ENCODE measurements at regions of chr6 and their contacts with region 1.

Region 1: GRCh38 chr6:110815217-110816109 is at the start of gene CDK19:
- DNase-seq: peak; percentile 99
- ATAC-seq: peak; percentile 85
- H3K4me3 Mint-ChIP-seq: peak within 1 kb of the TSS; percentile 88
- H3K27ac Mint-ChIP-seq: peak within 1 kb of the TSS; percentile 98
- H3K4me1 Mint-ChIP-seq: peaks cover 32% of the 10 kb centered on the region
- H3K27me3 Mint-ChIP-seq: no peaks in the 10 kb centered on the region
- total RNA-seq, gene CDK19: 14.7 to 15.7 TPM

Region 2: GRCh38 chr6:110179401-110180227 is 635.8 kb before region 1 on chr6 and contains the start of gene WASF1:
- CTCF ChIA-PET with region 1: no interaction called
- POLR2A ChIA-PET with region 1: no interaction called
- intact Hi-C with region 1: loop called in 1 of 2 experiments (anchors 1 kb)
- DNase-seq: peak; percentile 94
- ATAC-seq: peak; percentile 89
- H3K4me3 Mint-ChIP-seq: no peak within 1 kb of the TSS
- H3K27ac Mint-ChIP-seq: peak within 1 kb of the TSS; percentile 7
- H3K4me1 Mint-ChIP-seq: peaks cover 5% of the 10 kb centered on the region
- H3K27me3 Mint-ChIP-seq: peaks cover 10% of the 10 kb centered on the region
- total RNA-seq, gene WASF1: 4.2 to 4.6 TPM

Region 3: GRCh38 chr6:110537208-110538123 is 278.0 kb before region 1 on chr6:
- CTCF ChIA-PET with region 1: no interaction called
- POLR2A ChIA-PET with region 1: no interaction called
- intact Hi-C with region 1: loop called in 1 of 2 experiments (anchors 2 kb)
- DNase-seq: no peak
- ATAC-seq: peak; percentile 95
- H3K4me3 Mint-ChIP-seq: no peak overlapping the region
- H3K27ac Mint-ChIP-seq: no peak overlapping the region
- H3K4me1 Mint-ChIP-seq: peaks cover 39% of the 10 kb centered on the region
- H3K27me3 Mint-ChIP-seq: no peaks in the 10 kb centered on the region

Region 4: GRCh38 chr6:110784610-110784979 is 30.9 kb before region 1 on chr6:
- CTCF ChIA-PET with region 1: interaction called, 3 read pairs
- POLR2A ChIA-PET with region 1: interaction called, 4 read pairs
- intact Hi-C with region 1: loop called in 1 of 2 experiments (anchors 1 kb)
- DNase-seq: no peak
- ATAC-seq: peak; percentile 55
- H3K4me3 Mint-ChIP-seq: no peak overlapping the region
- H3K27ac Mint-ChIP-seq: no peak overlapping the region
- H3K4me1 Mint-ChIP-seq: peaks cover 39% of the 10 kb centered on the region
- H3K27me3 Mint-ChIP-seq: no peaks in the 10 kb centered on the region

Region 5: DNA sequence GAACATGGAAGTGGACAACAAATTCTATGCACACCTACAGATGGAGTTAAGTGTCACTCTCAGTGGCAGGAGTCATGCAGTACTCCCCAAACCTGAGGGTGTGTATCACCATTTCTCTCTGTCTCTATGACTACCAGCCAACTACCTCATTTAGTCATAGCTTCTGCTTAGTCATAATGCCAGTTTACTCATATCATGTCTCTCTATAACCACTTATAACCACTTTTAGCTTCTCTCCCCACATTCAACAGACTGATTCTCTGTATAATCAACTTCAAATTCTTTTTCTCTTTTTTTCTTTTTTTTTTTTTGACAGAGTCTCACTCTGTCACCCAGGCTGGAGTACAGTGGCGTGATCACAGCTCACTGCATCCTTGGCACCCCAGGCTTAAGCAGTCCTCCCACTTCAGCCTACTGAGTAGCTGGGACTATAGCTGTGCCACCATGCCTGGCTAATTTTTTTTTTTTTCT is 129.3 kb after region 1 on chr6:
- CTCF ChIA-PET with region 1: no interaction called
- POLR2A ChIA-PET with region 1: interaction called, 9 read pairs
- intact Hi-C with region 1: loop called (anchors 1 kb)
- DNase-seq: peak; percentile 71
- ATAC-seq: peak; percentile 98
- H3K4me3 Mint-ChIP-seq: no peak overlapping the region
- H3K27ac Mint-ChIP-seq: peak overlapping the region; percentile 60
- H3K4me1 Mint-ChIP-seq: peaks cover 15% of the 10 kb centered on the region
- H3K27me3 Mint-ChIP-seq: no peaks in the 10 kb centered on the region

Region 6: DNA sequence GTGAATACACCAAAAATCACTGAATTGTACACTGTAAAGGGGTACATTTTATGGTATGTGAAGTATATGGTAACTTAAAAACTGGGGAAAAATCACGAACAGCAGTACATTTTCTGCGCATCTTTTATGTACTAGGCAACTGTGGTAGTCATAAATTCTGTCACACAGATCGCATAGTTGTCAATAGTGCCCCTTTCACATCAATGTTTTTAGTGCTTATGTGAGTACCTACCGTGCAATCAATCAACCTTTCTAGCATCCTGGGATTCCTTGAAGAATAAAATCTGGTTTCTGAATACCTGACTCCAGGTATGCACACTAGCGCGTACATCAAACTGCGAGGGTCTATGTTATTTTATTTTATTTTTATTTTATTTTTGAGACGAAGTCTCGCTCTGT is 165.7 kb after region 1 on chr6:
- CTCF ChIA-PET with region 1: interaction called, 3 read pairs
- POLR2A ChIA-PET with region 1: interaction called, 11 read pairs
- intact Hi-C with region 1: loop called in 1 of 2 experiments (anchors 1 kb)
- DNase-seq: no peak
- ATAC-seq: no peak
- H3K4me3 Mint-ChIP-seq: peak overlapping the region; percentile 99
- H3K27ac Mint-ChIP-seq: peak overlapping the region; percentile 97
- H3K4me1 Mint-ChIP-seq: peaks cover 31% of the 10 kb centered on the region
- H3K27me3 Mint-ChIP-seq: no peaks in the 10 kb centered on the region

Measured in activated CD4-positive, alpha-beta T cell treated with anti-CD3 and anti-CD28 coated beads for 36 hours (primary cell).